ENCODE measurements at regions of chr17 and their contacts with region 1.

Region 1: GRCh38 chr17:43840814-43841213 is 6.2 kb upstream of the CD300LG start:
- DNase-seq: peak; percentile 20 to 47
- H3K4me3 ChIP-seq: no peak overlapping the region; the same call in 1 of the 2 replicates
- H3K27ac ChIP-seq: peak overlapping the region; percentile 81
- H3K4me1 ChIP-seq: peaks cover 44% of the 10 kb centered on the region
- H3K27me3 ChIP-seq: no peaks in the 10 kb centered on the region
- CTCF ChIP-seq: 0 out of 2 replicates have a peak, but pooled peaks have one; percentile 29

Region 2: GRCh38 chr17:43778337-43779144 is 62.3 kb before region 1 on chr17 and contains the start of gene DUSP3:
- CTCF ChIA-PET with region 1: interaction called, 4 read pairs
- POLR2A ChIA-PET with region 1: interaction called, 3 read pairs
- intact Hi-C with region 1: loop called (anchors 1 kb)
- DNase-seq: peak; percentile 89 to 94
- H3K4me3 ChIP-seq: peak within 1 kb of the TSS; percentile 81
- H3K27ac ChIP-seq: peak within 1 kb of the TSS; percentile 76
- H3K4me1 ChIP-seq: peaks cover 14% of the 10 kb centered on the region
- H3K27me3 ChIP-seq: peaks cover 20% of the 10 kb centered on the region; the same call in 1 of the 2 replicates
- CTCF ChIP-seq: no peak
- total RNA-seq, gene DUSP3: 37.2 and 38.4 TPM in 2 replicates

Measured in PC-9 (cell line).